MCF 10A (cell line): ENCODE measurements at regions of chr14 and their contacts with region 1.

Region 1: DNA sequence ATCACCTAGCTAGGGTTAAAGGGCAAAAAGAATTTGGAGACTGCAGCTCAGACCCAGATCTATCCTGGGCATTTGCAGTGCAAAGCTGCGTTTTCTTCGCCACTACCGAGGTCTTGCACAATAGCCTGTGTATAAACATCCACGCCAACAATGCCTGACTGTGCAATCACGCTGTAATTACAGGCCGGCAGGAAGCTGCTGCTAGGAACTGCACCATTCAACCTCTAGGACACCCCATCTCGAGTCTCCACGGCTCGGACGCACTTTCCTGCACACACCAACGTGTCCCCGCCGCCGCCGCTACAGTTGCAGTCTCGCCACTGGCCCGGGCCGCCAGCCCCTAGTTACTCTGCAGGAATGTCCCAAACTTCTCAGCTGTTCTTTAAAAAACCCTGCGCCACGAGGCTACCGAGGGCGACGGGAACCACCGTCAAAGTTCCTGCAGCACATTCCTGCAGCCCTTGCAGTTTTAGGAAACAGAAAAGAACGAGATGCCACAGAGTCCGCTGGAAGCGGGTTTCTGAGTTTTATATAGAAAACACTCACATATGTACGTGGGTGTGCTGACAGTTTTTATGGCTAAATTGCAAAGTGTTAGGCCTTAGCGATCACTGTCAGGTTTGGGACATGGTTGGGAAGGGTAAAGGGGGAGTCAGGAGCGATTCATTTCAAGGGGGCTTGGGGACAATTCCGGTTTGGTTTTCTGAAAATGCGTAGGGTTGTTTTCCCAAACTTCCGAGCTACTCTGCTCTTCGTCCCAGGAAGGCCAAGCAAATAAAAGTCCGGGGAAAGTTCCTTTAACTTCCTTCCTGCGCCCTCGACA is 65.5 kb upstream of the PTGR2 start:
- DNase-seq: peak; percentile 93
- H3K4me3 Mint-ChIP-seq: peak overlapping the region; percentile 81
- H3K27ac Mint-ChIP-seq: peak overlapping the region; percentile 78
- H3K4me1 Mint-ChIP-seq: peaks cover 61% of the 10 kb centered on the region
- H3K27me3 Mint-ChIP-seq: no peaks in the 10 kb centered on the region
- CTCF ChIP-seq: no peak

Region 2: DNA sequence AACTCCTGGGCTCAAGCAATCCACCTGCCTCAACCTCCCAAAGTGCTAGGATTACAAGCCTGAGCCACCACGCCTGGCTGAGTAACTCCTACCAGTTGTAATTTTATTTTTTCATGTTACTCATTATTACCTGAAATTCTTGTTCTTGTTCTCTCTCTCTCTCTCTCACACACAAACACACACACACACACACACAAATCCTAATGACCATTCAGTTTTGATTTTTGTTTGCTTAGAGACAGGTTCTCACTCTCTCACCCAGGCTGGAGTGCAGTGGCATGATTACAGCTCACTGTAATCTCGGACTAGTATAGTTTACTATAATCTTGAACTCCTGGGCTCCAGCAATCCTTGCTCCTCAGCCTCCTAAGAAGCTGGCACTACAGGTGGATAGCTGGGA is 111.0 kb before region 1 on chr14:
- CTCF ChIA-PET with region 1: no interaction called
- POLR2A ChIA-PET with region 1: no interaction called
- intact Hi-C with region 1: no loop called
- DNase-seq: no peak
- H3K4me3 Mint-ChIP-seq: no peak overlapping the region
- H3K27ac Mint-ChIP-seq: no peak overlapping the region
- H3K4me1 Mint-ChIP-seq: no peaks in the 10 kb centered on the region
- H3K27me3 Mint-ChIP-seq: no peaks in the 10 kb centered on the region
- CTCF ChIP-seq: no peak

Region 3: GRCh38 chr14:73741386-73741875 is 44.7 kb before region 1 on chr14:
- CTCF ChIA-PET with region 1: interaction called, 3 read pairs
- POLR2A ChIA-PET with region 1: interaction called, 59 read pairs
- intact Hi-C with region 1: no loop called
- DNase-seq: peak; percentile 84
- H3K4me3 Mint-ChIP-seq: peak overlapping the region; percentile 65
- H3K27ac Mint-ChIP-seq: peak overlapping the region; percentile 92
- H3K4me1 Mint-ChIP-seq: peaks cover 55% of the 10 kb centered on the region
- H3K27me3 Mint-ChIP-seq: no peaks in the 10 kb centered on the region
- CTCF ChIP-seq: no peak

Region 4: GRCh38 chr14:73753959-73754882 is 31.9 kb before region 1 on chr14:
- CTCF ChIA-PET with region 1: interaction called, 30 read pairs
- POLR2A ChIA-PET with region 1: interaction called, 480 read pairs
- intact Hi-C with region 1: loop called (anchors 5 kb)
- DNase-seq: peak; percentile 48
- H3K4me3 Mint-ChIP-seq: peak overlapping the region; percentile 86
- H3K27ac Mint-ChIP-seq: peak overlapping the region; percentile 89
- H3K4me1 Mint-ChIP-seq: peaks cover 71% of the 10 kb centered on the region
- H3K27me3 Mint-ChIP-seq: no peaks in the 10 kb centered on the region
- CTCF ChIP-seq: no peak

Region 5: GRCh38 chr14:73771848-73772638 is 14.0 kb before region 1 on chr14:
- CTCF ChIA-PET with region 1: interaction called, 4 read pairs
- POLR2A ChIA-PET with region 1: interaction called, 115 read pairs
- intact Hi-C with region 1: no loop called
- DNase-seq: peak; percentile 83
- H3K4me3 Mint-ChIP-seq: no peak overlapping the region
- H3K27ac Mint-ChIP-seq: peak overlapping the region; percentile 51
- H3K4me1 Mint-ChIP-seq: peaks cover 38% of the 10 kb centered on the region
- H3K27me3 Mint-ChIP-seq: no peaks in the 10 kb centered on the region
- CTCF ChIP-seq: no peak

Region 6: GRCh38 chr14:73802431-73803188 is 16.5 kb after region 1 on chr14:
- CTCF ChIA-PET with region 1: interaction called, 11 read pairs
- POLR2A ChIA-PET with region 1: interaction called, 250 read pairs
- intact Hi-C with region 1: no loop called
- DNase-seq: peak; percentile 80
- H3K4me3 Mint-ChIP-seq: peak overlapping the region; percentile 47
- H3K27ac Mint-ChIP-seq: peak overlapping the region; percentile 86
- H3K4me1 Mint-ChIP-seq: peaks cover 25% of the 10 kb centered on the region
- H3K27me3 Mint-ChIP-seq: no peaks in the 10 kb centered on the region
- CTCF ChIP-seq: no peak

Region 7: DNA sequence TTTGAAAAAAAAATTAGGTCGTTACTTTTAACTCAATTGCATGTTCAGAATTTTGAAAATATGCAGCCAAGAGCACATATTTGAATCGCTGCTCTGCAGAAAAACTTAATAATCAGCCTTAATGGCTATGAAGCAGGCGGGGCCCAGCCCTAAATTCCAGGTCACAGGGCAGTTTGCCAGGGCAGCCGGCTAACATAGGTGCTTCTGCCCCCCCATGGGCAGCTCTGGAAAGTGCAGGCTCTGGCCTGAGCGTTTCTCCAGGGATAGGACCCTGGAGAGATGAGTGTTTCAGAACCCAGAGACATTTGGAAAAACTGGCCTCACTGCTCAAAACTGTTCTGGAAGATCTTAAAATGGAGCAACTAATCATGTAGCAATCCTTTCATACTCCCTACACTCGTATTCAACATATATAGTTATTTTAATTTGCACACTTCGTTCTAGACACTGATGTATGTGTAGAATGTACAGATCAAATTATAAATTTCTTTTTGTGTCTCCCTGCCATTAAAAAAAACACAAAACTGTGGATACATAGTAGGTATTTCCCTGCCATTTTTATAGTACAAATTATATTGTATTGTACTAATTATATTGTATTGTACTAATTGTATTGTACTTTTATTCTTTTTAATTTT is 39.6 kb after region 1 on chr14:
- CTCF ChIA-PET with region 1: interaction called, 6 read pairs
- POLR2A ChIA-PET with region 1: interaction called, 107 read pairs
- intact Hi-C with region 1: loop called (anchors 1 kb)
- DNase-seq: peak; percentile 89
- H3K4me3 Mint-ChIP-seq: no peak overlapping the region
- H3K27ac Mint-ChIP-seq: no peak overlapping the region
- H3K4me1 Mint-ChIP-seq: peaks cover 19% of the 10 kb centered on the region
- H3K27me3 Mint-ChIP-seq: no peaks in the 10 kb centered on the region
- CTCF ChIP-seq: peak; percentile 89